Activated CD4-positive, alpha-beta T cell treated with anti-CD3 and anti-CD28 coated beads, Interleukin-2, amount 10 ng/mL, durations not matched to agents 24 days and 14 days (primary cell): ENCODE measurements at regions of chr6 and their contacts with region 1.

Region 1: GRCh38 chr6:33570806-33571636 is 9.1 kb downstream of the BAK1 start:
- DNase-seq: peak; percentile 98
- H3K4me3 Mint-ChIP-seq: peak overlapping the region; percentile 86
- H3K27ac Mint-ChIP-seq: peak overlapping the region; percentile 99
- H3K4me1 Mint-ChIP-seq: peaks cover 52% of the 10 kb centered on the region
- H3K27me3 Mint-ChIP-seq: no peaks in the 10 kb centered on the region

Region 2: DNA sequence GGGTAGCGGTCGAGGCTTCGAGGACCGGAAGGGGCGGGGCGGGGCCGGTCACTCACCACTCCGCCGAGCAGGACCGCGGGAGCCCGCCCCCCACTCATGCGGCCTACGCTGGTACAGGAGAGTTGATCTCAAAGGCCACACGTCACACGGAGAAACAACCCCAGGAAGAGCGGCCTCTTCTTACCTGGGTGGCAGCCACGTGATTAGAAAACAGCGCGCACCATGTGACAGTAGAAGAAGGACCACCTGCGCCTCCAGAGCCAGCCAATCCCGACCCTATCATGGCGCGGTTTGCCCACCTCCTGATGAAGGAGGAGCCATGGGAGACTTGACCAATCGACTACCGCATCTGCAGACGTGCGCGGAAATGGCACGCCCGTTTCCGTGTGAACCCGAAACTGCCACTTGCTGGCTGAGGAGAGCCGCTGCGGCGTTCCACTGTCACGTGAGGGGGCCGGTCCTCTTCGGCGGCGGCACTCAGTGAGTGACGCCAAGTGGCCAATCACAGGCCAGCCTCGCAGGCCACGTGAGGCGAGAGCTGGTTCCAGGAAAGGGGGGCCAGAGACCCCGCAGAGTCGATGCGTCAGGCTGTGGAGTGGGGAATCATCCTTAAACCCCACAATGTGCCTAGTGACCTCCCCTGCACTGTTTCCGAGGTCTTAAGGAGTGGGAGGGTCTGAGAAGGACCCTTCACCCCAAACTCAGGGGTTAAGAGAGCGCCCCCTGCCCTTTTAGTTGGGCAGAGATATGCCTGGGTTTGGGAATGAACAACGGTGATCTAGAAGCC is 152.9 kb before region 1 on chr6 and contains the start of gene CUTA:
- intact Hi-C with region 1: loop called (anchors 1 kb)
- DNase-seq: peak; percentile 100
- H3K4me3 Mint-ChIP-seq: peak within 1 kb of the TSS; percentile 92
- H3K27ac Mint-ChIP-seq: peak within 1 kb of the TSS; percentile 96
- H3K4me1 Mint-ChIP-seq: peaks cover 63% of the 10 kb centered on the region
- H3K27me3 Mint-ChIP-seq: peaks cover 1% of the 10 kb centered on the region
- total RNA-seq, gene CUTA: 120 and 124 TPM in 2 replicates

Region 3: DNA sequence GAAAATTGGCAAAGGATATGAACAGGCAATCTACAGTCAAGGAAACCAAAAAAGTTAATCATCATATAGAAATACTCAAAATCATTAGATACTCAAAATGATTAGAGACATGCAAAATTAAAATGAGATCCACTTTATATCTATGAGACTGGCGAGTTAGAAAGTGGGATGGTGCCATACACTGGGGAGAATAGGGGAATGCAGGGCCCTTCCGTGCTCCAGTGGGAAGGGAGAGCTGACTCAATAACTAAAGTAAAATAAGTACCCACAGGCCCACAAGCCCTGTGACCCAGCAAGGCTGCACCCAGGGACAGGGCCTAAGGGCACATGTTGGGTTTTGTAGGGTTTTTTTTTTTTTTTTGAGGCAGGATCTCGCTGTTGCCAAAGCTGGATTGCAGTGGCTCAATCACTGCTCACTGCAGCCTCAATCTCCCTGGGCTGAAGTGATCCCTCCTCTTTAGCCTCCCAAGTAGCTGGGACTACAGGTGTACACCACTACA is 35.9 kb before region 1 on chr6:
- intact Hi-C with region 1: loop called (anchors 1 kb)
- DNase-seq: no peak
- H3K4me3 Mint-ChIP-seq: no peak overlapping the region
- H3K27ac Mint-ChIP-seq: no peak overlapping the region
- H3K4me1 Mint-ChIP-seq: peaks cover 21% of the 10 kb centered on the region
- H3K27me3 Mint-ChIP-seq: peaks cover 2% of the 10 kb centered on the region

Region 4: DNA sequence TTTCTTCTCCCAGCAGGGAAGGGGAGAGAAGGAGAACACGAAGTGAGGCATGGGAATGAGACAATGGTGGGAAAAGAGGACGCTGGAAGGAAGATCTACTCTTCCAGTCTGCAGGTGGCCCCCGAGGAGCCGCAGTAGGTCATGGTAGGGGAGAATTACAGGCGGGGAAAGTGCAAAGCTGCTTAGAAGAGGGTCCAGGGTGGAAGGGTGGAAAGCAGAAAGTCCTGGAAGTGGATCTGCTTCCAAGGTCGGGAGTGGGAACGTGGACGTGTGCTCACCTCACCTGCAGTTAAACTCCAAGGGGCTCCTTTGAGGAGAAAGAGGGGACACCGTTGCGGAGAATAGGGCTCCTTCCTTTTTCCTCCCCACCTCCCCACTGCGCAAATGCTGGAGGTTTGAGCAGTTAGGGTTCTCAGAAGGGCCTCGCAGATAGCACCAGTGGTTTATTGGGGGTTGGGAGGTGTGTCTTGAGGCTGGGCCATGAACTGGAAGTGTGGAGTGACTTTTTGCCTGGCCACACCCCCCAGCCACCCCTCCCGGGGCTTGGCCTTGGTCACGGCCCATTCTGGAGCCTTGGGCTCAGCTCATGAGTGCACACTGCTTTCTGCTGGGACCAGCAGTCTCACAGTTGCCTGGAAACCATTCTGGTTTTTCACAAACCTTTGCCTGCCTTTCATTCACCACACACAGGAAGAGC is 333.2 kb after region 1 on chr6:
- intact Hi-C with region 1: no loop called
- DNase-seq: peak; percentile 97
- H3K4me3 Mint-ChIP-seq: peak overlapping the region; percentile 73
- H3K27ac Mint-ChIP-seq: peak overlapping the region; percentile 94
- H3K4me1 Mint-ChIP-seq: peaks cover 67% of the 10 kb centered on the region
- H3K27me3 Mint-ChIP-seq: no peaks in the 10 kb centered on the region